ENCODE measurements at regions of chr12 and their contacts with region 1.

Region 1: GRCh38 chr12:12032851-12033588 is 37.7 kb upstream of the BCL2L14 start:
- DNase-seq: peak; percentile 84 to 88
- ATAC-seq: peak; percentile 89
- H3K4me3 ChIP-seq: peak overlapping the region; percentile 27 to 94
- H3K27ac ChIP-seq: peak overlapping the region; percentile 20 to 53
- H3K4me1 ChIP-seq: no peaks in the 10 kb centered on the region
- H3K27me3 ChIP-seq: no peaks in the 10 kb centered on the region

Region 2: DNA sequence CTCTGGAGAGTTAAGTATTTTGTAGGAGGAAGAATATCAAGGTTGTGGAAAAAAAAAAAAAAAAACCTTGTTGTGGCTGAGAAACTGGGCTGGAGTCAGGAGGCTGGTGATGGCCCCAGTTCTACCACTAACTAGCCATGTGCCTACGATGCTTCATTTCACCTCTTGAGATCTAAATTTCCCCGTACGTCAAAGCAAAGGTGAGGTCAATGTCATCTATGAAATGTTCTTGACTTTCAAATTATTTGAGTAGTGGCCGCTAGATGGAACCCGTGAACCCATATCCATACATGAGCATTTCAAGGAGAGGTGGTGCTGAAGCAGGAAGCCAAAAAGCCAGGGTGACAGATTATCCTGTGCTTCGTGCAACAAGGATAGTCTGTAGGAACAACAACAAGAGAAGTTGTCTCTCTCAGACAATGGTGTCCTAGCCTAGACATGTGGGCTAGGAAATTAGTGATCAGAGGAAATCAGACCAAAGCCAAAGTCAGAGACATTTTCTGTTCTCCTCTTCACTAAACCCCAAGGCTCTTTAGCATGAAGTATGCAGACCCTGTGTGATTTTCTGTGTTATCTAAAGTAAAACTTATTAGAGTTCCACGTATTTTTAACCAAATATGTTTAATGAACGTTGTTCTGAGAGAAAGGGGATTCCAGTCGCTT is 479.0 kb before region 1 on chr12:
- intact Hi-C with region 1: loop called (anchors 10 kb)
- DNase-seq: no peak
- ATAC-seq: peak; percentile 62
- H3K4me3 ChIP-seq: peak overlapping the region in 1 of 2 donors; percentile 32
- H3K27ac ChIP-seq: no peak overlapping the region
- H3K4me1 ChIP-seq: no peaks in the 10 kb centered on the region
- H3K27me3 ChIP-seq: no peaks in the 10 kb centered on the region

Region 3: DNA sequence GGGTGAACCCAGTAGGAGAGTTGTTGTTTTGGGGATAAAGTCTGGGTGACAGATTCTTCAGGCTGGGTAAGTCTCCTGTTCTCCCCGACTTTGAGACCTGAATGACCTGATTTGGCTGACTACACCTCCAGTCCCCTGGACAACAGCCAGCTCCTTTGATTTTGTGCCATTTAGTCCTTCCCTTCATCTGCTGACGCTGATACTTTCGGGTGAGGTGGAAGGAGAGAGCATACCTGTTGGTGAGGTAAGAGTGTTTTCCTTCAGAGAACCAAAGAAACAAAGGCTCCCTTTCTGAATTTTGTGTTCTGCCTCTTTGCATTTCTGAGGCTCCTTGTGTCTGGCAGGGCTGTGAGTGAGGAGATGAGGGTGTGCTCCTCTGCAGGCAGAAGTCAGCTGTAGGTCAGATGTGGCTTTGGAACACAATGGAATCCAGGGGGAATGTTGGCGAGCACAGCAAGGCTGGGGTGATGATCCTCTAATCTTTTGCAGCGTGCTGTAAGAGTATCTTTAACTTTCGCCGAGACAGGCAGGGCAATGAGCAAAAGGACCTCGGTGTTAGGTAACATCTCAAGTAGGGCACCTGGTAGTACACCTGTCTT is 371.4 kb before region 1 on chr12:
- intact Hi-C with region 1: no loop called
- DNase-seq: no peak
- ATAC-seq: no peak
- H3K4me3 ChIP-seq: no peak overlapping the region
- H3K27ac ChIP-seq: peak overlapping the region in 1 of 2 donors; percentile 80
- H3K4me1 ChIP-seq: peaks cover 15 to 24% of the 10 kb centered on the region in 2 donors
- H3K27me3 ChIP-seq: no peaks in the 10 kb centered on the region

Measured in aorta (tissue), 5 donors.